ENCODE measurements at regions of chr12 and their contacts with region 1.

Region 1: GRCh38 chr12:68317047-68317667 is 15.0 kb downstream of the MDM1 start:
- DNase-seq: peak; percentile 20 to 46
- H3K4me3 ChIP-seq: no peak overlapping the region
- H3K27ac ChIP-seq: peak overlapping the region; percentile 19 to 23
- H3K4me1 ChIP-seq: peaks cover 0 to 6% of the 10 kb centered on the region in 2 donors
- H3K27me3 ChIP-seq: no peaks in the 10 kb centered on the region
- CTCF ChIP-seq: peak; percentile 60 to 72 (median 68)
- POLR2A ChIP-seq: no peak

Region 2: GRCh38 chr12:68223083-68223747 is 93.9 kb before region 1 on chr12:
- intact Hi-C with region 1: loop called (anchors 10 kb)
- DNase-seq: peak; percentile 80 to 90
- H3K4me3 ChIP-seq: no peak overlapping the region
- H3K27ac ChIP-seq: peak overlapping the region; percentile 49 to 68
- H3K4me1 ChIP-seq: no peaks in the 10 kb centered on the region
- H3K27me3 ChIP-seq: peaks cover 0 to 5% of the 10 kb centered on the region in 2 donors
- CTCF ChIP-seq: peak; percentile 79 to 86 (median 85)
- POLR2A ChIP-seq: no peak